Heart left ventricle (tissue), 16 donors: ENCODE measurements at regions of chr15 and their contacts with region 1.

Region 1: DNA sequence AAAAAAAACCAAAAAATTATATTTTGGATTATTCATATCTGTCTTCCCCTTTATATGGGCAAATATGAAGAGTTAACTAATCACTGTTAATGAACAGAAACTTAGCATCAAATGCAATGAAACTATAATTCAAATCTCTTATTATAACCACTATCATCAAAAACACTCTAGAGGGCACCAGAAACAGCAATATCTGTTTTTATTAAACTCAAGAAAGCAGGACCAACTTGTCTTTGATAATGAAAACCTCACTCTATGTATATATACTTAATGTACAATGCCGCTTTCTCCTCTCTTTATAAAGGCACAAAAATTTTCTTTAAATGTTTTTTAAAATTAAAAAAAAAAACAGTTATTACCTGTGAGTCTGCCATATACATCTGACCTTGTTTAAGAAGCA is 92.7 kb downstream of the UACA start:
- DNase-seq: no peak
- ATAC-seq: no peak
- H3K4me3 ChIP-seq: no peak overlapping the region
- H3K27ac ChIP-seq: peak overlapping the region in 1 of 12 donors; percentile 62
- H3K4me1 ChIP-seq: peaks cover 0 to 43% (median 14%) of the 10 kb centered on the region in 12 donors
- H3K27me3 ChIP-seq: no peaks in the 10 kb centered on the region
- CTCF ChIP-seq: peak in 4 of 12 donors; percentile 22 to 33 (median 28)
- POLR2A ChIP-seq: no peak

Region 2: GRCh38 chr15:70722266-70723121 is 51.8 kb after region 1 on chr15:
- intact Hi-C with region 1: loop called in 9 of 10 experiments (anchors 10 kb)
- DNase-seq: no peak
- ATAC-seq: no peak
- H3K4me3 ChIP-seq: no peak overlapping the region
- H3K27ac ChIP-seq: no peak overlapping the region
- H3K4me1 ChIP-seq: peaks cover 0 to 66% (median 33%) of the 10 kb centered on the region in 12 donors
- H3K27me3 ChIP-seq: no peaks in the 10 kb centered on the region
- CTCF ChIP-seq: peak; percentile 59 to 88 (median 77)
- POLR2A ChIP-seq: no peak

Region 3: DNA sequence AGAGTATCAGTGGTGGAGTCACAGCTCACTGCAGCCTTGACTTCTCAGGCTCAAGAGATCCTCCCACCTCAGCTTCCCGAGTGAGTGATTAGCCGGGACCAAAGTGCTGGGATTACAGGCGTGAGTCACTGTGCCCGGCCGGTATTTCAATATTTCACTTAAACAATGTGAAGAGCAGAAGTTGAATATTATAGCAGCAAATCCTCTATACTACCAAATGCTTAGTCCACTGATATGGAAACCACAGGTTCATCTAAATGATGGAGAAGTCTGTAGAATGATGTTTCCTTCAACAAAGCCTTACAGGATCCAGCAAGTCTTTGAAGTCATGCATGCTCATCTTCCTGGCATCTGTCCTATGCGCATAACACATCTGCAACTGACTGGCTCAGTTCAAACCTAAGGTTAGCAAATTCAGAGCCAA is 112.9 kb after region 1 on chr15:
- intact Hi-C with region 1: no loop called
- DNase-seq: no peak
- ATAC-seq: no peak
- H3K4me3 ChIP-seq: no peak overlapping the region
- H3K27ac ChIP-seq: no peak overlapping the region
- H3K4me1 ChIP-seq: peaks cover 0 to 4% (median 0%) of the 10 kb centered on the region in 12 donors
- H3K27me3 ChIP-seq: no peaks in the 10 kb centered on the region
- CTCF ChIP-seq: no peak
- POLR2A ChIP-seq: no peak

Region 4: DNA sequence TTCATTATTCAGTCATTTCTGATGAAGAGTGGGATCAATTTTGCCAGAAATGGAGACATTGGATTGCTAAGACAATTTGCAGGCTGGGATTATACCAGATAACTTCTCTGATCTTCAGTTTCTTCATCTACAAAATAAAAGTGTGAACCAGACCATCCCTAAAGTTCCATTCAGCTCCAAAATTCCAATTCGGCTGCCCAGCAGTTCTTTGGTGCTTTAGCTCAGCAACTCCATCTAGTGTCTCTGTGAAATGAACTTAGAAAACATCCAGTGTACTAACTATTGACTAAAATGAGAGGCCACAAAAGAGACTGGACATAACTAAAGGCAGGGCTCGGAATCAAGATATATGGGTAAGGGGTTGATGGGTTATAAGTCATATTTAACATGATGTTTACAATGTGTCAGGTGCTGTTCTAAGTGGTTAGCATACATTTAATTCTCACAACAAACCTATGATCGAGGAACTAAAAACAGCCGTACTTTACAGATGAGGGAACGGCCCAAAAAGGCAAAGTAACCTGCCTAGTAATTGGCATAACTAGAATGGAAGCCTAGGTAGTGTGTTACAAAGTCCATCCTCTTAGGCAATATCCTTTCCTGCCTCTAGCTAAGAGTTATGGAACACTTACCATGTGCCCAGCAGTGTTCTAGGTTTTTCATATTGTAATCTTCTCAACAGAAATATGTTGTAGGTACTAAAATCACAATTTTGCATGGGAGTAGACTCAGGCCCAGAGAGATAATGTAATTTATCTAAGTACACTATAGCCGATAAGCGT is 204.5 kb after region 1 on chr15:
- intact Hi-C with region 1: loop called in 3 of 10 experiments (anchors 10 kb)
- DNase-seq: no peak
- ATAC-seq: peak; percentile 11 to 67 (median 59)
- H3K4me3 ChIP-seq: no peak overlapping the region
- H3K27ac ChIP-seq: no peak overlapping the region
- H3K4me1 ChIP-seq: peaks cover 0 to 6% (median 3%) of the 10 kb centered on the region in 12 donors
- H3K27me3 ChIP-seq: no peaks in the 10 kb centered on the region
- CTCF ChIP-seq: peak; percentile 31 to 74 (median 62)
- POLR2A ChIP-seq: no peak